ENCODE measurements at regions of chr5 and their contacts with region 1.

Region 1: DNA sequence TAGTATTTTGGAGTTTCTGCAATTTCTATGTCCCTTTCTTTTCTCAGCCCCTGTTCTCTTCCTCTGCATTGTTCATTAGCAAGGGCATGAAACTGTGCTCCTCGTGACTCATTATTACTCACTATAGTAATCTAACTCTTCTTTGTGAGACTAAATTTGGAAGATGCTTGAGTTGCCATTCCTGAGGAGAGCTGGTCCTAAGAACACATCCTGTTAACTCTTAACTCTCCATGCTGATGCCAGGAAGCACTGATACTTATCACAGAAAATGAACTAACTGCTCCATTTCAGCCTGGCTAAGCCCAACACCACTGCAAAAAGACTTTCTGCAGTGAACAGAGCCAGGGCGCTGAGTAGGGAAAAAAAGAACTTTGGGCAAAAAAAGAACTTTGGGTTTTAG is 10.6 kb upstream of the CSNK1A1 start:
- DNase-seq: no peak
- ATAC-seq: no peak
- H3K4me3 Mint-ChIP-seq: no peak overlapping the region
- H3K27ac Mint-ChIP-seq: no peak overlapping the region
- H3K4me1 Mint-ChIP-seq: peaks cover 5% of the 10 kb centered on the region
- H3K27me3 Mint-ChIP-seq: no peaks in the 10 kb centered on the region

Region 2: DNA sequence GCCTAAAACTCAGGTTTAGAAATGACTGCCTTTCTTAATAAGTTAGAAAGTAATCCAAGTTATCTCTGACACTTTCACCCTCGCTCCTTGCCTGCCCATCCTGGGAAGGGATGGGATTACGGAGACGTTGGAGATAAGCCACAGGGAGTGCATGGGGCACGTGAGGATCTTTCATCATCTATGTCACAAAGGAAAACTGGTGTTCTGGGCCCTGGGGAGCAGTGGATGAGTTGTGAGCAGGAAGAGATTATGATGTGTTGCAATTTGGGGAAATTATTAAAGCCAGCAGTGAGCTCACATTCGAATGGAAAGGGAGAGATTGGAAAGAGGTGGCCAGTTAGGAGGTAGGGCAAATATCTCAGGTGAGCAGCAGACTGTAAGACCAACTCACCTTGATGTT is 277.3 kb before region 1 on chr5:
- CTCF ChIA-PET with region 1: no interaction called
- DNase-seq: no peak
- ATAC-seq: no peak
- H3K4me3 Mint-ChIP-seq: no peak overlapping the region
- H3K27ac Mint-ChIP-seq: no peak overlapping the region
- H3K4me1 Mint-ChIP-seq: no peaks in the 10 kb centered on the region
- H3K27me3 Mint-ChIP-seq: peaks cover 20% of the 10 kb centered on the region

Region 3: GRCh38 chr5:149434162-149435014 is 127.5 kb before region 1 on chr5:
- CTCF ChIA-PET with region 1: interaction called, 17 read pairs
- DNase-seq: peak; percentile 62
- ATAC-seq: peak; percentile 53
- H3K4me3 Mint-ChIP-seq: no peak overlapping the region
- H3K27ac Mint-ChIP-seq: no peak overlapping the region
- H3K4me1 Mint-ChIP-seq: peaks cover 26% of the 10 kb centered on the region
- H3K27me3 Mint-ChIP-seq: peaks cover 10% of the 10 kb centered on the region

Region 4: DNA sequence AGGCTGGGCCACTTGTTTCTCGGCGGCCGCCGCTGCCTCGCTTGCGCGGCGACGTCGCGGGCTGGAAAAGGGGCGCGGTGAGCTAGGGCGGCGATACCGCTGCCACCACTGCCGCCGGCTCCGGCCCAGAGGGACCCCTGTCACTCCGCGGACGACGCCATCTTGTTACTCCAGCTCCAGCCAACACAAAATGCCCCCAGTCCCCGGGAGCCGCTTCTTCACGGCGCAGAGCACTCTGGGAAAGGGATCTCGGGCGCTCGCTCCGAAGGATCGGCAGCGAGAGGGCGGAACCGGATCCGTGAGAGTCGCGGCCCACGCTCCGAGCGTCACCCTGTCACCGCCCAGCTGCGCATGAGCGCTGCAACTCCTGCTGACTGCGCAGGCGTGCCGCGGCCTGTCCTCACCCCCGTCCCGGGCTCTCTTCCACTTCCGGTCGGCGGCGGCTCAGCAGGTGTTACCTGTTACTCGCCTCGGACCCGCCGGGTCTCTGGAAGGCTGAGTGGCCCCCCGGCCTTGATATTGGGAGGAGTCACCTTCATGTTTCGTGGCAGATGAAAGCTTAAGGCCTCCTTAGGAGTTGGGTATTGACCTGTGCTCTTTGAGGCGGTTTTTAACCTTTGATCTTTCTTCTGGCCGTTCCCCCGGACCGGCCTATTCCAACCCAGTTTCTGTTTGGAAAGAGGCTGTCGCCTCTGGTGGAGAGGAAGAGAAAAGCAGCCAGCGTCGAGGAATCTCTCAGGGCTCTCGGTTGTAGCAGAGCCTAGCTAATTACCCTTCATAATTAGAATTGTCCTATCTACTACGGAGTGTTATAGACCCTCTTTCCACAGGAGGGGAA is 10.4 kb before region 1 on chr5 and contains the start of gene CSNK1A1:
- CTCF ChIA-PET with region 1: interaction called, 32 read pairs
- DNase-seq: peak; percentile 99
- ATAC-seq: peak; percentile 94
- H3K4me3 Mint-ChIP-seq: peak within 1 kb of the TSS; percentile 96
- H3K27ac Mint-ChIP-seq: peak within 1 kb of the TSS; percentile 98
- H3K4me1 Mint-ChIP-seq: peaks cover 27% of the 10 kb centered on the region
- H3K27me3 Mint-ChIP-seq: no peaks in the 10 kb centered on the region
- total RNA-seq, gene CSNK1A1: 193 to 204 TPM